ENCODE measurements at regions of chr13 and their contacts with region 1.

Region 1: GRCh38 chr13:69980799-69981198 is 126.8 kb upstream of the ATXN8OS start:
- DNase-seq: no peak
- ATAC-seq: no peak
- H3K4me3 ChIP-seq: no peak overlapping the region
- H3K4me3 Mint-ChIP-seq: no peak overlapping the region
- H3K27ac ChIP-seq: no peak overlapping the region
- H3K27ac Mint-ChIP-seq: no peak overlapping the region
- H3K4me1 ChIP-seq: no peaks in the 10 kb centered on the region
- H3K4me1 Mint-ChIP-seq: no peaks in the 10 kb centered on the region
- H3K27me3 ChIP-seq: no peaks in the 10 kb centered on the region
- H3K27me3 Mint-ChIP-seq: no peaks in the 10 kb centered on the region
- CTCF ChIP-seq: no peak

Region 2: GRCh38 chr13:69879936-69880335 is 100.9 kb before region 1 on chr13:
- CTCF ChIA-PET with region 1: no interaction called
- POLR2A ChIA-PET with region 1: no interaction called
- intact Hi-C with region 1: no loop called
- DNase-seq: no peak
- ATAC-seq: no peak
- H3K4me3 ChIP-seq: no peak overlapping the region
- H3K4me3 Mint-ChIP-seq: no peak overlapping the region
- H3K27ac ChIP-seq: no peak overlapping the region
- H3K27ac Mint-ChIP-seq: no peak overlapping the region
- H3K4me1 ChIP-seq: no peaks in the 10 kb centered on the region
- H3K4me1 Mint-ChIP-seq: no peaks in the 10 kb centered on the region
- H3K27me3 ChIP-seq: no peaks in the 10 kb centered on the region
- H3K27me3 Mint-ChIP-seq: no peaks in the 10 kb centered on the region
- CTCF ChIP-seq: no peak

Region 3: GRCh38 chr13:70784207-70784989 is 803.6 kb after region 1 on chr13:
- CTCF ChIA-PET with region 1: no interaction called
- POLR2A ChIA-PET with region 1: no interaction called
- intact Hi-C with region 1: loop called in 1 of 2 experiments (anchors 5 kb)
- DNase-seq: no peak
- ATAC-seq: no peak
- H3K4me3 ChIP-seq: no peak overlapping the region
- H3K4me3 Mint-ChIP-seq: no peak overlapping the region
- H3K27ac ChIP-seq: no peak overlapping the region
- H3K27ac Mint-ChIP-seq: no peak overlapping the region
- H3K4me1 ChIP-seq: no peaks in the 10 kb centered on the region
- H3K4me1 Mint-ChIP-seq: no peaks in the 10 kb centered on the region
- H3K27me3 ChIP-seq: no peaks in the 10 kb centered on the region
- H3K27me3 Mint-ChIP-seq: no peaks in the 10 kb centered on the region
- CTCF ChIP-seq: no peak